ENCODE measurements at regions of chr12 and their contacts with region 1.

Region 1: DNA sequence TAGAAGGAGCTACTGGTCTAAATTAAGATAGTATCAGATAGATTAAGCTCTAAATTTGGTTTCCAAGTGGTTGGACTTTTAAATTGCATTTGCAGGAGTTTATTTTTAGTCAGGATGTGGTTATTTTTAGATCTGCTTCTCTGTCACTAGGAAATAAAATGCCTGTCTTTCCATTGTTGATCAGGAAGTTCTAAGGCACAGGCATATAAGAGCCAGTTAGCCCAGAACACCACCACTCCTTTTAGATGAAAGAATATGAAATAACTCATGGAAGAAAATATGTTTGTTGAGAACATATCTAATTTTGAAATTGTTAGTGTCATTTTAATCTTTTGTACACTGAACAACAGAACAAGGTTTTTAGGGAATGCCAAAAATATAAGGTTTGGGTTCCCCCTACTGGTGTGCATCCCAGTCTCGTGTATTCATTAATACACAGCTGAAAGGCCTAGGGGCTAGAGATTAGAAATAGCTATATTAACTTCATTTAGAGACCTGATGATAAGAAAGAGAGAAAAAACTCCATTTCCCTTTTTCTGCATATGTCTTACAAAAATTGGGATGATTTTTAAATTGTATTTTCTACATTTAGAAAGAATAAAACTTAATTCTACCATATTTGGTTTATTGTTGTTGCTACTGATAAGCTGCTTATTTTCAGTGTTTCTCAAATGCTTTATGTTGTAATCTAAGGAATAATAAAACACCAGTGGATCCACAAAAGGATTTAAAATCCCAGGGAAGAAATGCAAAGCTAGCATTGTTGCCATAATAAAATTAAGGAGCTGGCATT is 67.2 kb downstream of the RIC8B start:
- DNase-seq: no peak
- ATAC-seq: peak; percentile 79
- H3K4me3 ChIP-seq: no peak overlapping the region
- H3K27ac ChIP-seq: no peak overlapping the region
- H3K4me1 ChIP-seq: no peaks in the 10 kb centered on the region
- H3K27me3 ChIP-seq: no peaks in the 10 kb centered on the region
- CTCF ChIP-seq: peak; percentile 44 to 68 (median 60); a peak in 5 of 6 replicates
- EP300 ChIP-seq: no peak
- POLR2A ChIP-seq: no peak
- RAD21 ChIP-seq: peak; percentile 83

Region 2: GRCh38 chr12:106357549-106358395 is 483.9 kb before region 1 on chr12 and contains the start of gene POLR3B:
- CTCF ChIA-PET with region 1: interaction called, 50 read pairs
- POLR2A ChIA-PET with region 1: no interaction called
- RAD21 ChIA-PET with region 1: interaction called, 21 read pairs
- SMC1A ChIA-PET with region 1: interaction called, 17 read pairs
- in situ Hi-C with region 1: no loop called
- intact Hi-C with region 1: no loop called
- DNase-seq: peak; percentile 74
- ATAC-seq: peak; percentile 92
- H3K4me3 ChIP-seq: peak within 1 kb of the TSS; percentile 89
- H3K27ac ChIP-seq: peak within 1 kb of the TSS; percentile 79
- H3K4me1 ChIP-seq: no peaks in the 10 kb centered on the region
- H3K27me3 ChIP-seq: no peaks in the 10 kb centered on the region
- CTCF ChIP-seq: peak; percentile 85 to 95 (median 95); a peak in 5 of 6 replicates
- EP300 ChIP-seq: peak in 1 of 2 experiments; percentile 27; a peak in 1 of 4 replicates
- POLR2A ChIP-seq: peak; percentile 85
- RAD21 ChIP-seq: peak; percentile 68
- polyA plus RNA-seq, gene POLR3B: 2.3 to 4.3 TPM

Region 3: GRCh38 chr12:106682592-106683234 is 159.0 kb before region 1 on chr12:
- CTCF ChIA-PET with region 1: interaction called, 12 read pairs
- POLR2A ChIA-PET with region 1: no interaction called
- RAD21 ChIA-PET with region 1: interaction called, 3 read pairs
- SMC1A ChIA-PET with region 1: interaction called, 5 read pairs
- in situ Hi-C with region 1: no loop called
- intact Hi-C with region 1: loop called (anchors 5 kb)
- DNase-seq: no peak
- ATAC-seq: peak; percentile 78
- H3K4me3 ChIP-seq: no peak overlapping the region
- H3K27ac ChIP-seq: no peak overlapping the region
- H3K4me1 ChIP-seq: no peaks in the 10 kb centered on the region
- H3K27me3 ChIP-seq: no peaks in the 10 kb centered on the region
- CTCF ChIP-seq: peak; percentile 14 to 36 (median 24); a peak in 4 of 6 replicates
- EP300 ChIP-seq: no peak
- POLR2A ChIP-seq: no peak
- RAD21 ChIP-seq: peak; percentile 54

Region 4: DNA sequence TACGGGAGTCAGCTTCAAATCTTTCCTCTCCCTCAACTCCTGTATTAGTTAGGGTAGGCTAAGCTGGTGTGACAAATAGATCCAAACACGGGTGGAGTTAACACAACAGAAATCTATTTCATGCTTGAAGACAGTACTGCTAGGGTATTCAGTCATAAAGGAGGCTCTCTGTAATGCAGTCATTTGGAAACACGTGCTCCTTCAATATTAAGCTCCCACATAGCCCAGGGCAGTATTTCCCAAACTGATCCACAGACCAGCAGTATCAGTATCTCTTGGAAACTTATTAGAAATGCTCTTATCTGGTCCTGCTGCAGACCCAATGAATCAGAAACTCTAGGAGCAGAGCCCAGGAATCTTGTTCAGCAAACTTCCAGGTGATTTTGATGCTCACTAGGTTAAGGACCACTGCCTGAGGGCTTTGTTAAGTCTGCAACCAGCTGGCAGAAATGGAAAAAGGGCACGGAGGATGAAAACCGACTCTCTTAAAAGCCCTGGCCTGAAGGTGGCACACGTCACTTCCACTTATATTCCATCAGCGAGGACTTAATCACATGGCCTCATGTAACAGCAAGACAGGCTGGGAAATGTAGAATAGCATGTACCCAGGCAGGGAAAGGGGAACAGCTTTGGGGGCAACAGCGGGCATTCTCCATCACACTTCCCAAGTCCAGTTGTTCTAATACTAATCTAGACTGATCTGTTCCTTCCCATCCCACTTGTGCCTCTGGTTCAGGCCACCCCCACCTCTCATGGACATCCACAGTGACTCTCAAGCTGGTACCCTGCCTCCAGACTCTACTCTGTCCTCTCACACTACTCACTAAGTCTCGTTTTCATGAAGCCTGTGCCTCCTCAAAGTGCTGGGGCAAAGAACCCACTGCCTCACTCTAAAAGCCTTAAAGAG is 105.4 kb before region 1 on chr12:
- CTCF ChIA-PET with region 1: interaction called, 31 read pairs
- POLR2A ChIA-PET with region 1: no interaction called
- RAD21 ChIA-PET with region 1: interaction called, 33 read pairs
- SMC1A ChIA-PET with region 1: interaction called, 26 read pairs
- in situ Hi-C with region 1: no loop called
- intact Hi-C with region 1: loop called (anchors 5 kb)
- DNase-seq: no peak
- ATAC-seq: peak; percentile 78
- H3K4me3 ChIP-seq: no peak overlapping the region
- H3K27ac ChIP-seq: no peak overlapping the region
- H3K4me1 ChIP-seq: no peaks in the 10 kb centered on the region
- H3K27me3 ChIP-seq: no peaks in the 10 kb centered on the region
- CTCF ChIP-seq: peak; percentile 21 to 50 (median 24); a peak in 4 of 6 replicates
- EP300 ChIP-seq: no peak
- POLR2A ChIP-seq: no peak
- RAD21 ChIP-seq: peak; percentile 44

Region 5: DNA sequence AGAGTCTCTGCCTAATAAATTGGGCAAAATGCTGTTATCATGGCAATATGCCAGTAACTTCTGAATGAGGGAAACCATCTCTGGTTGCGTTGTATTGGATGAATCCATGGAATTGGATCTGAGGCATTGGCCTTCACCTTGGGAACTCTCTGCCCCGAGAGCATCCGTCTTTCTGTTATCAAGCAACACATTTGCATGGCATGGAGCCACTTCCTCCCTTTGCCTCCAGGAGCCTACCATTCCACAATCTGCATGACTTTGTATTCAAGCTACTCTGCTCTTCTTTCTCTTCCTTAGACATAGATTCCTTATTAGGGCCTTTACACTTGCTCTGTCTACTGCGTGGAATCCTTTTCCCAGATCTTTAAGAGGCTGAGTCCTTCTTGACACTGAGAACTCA is 10.0 kb before region 1 on chr12:
- CTCF ChIA-PET with region 1: interaction called, 22 read pairs
- POLR2A ChIA-PET with region 1: no interaction called
- RAD21 ChIA-PET with region 1: no interaction called
- SMC1A ChIA-PET with region 1: interaction called, 10 read pairs
- in situ Hi-C with region 1: no loop called
- intact Hi-C with region 1: no loop called
- DNase-seq: no peak
- ATAC-seq: no peak
- H3K4me3 ChIP-seq: no peak overlapping the region
- H3K27ac ChIP-seq: no peak overlapping the region
- H3K4me1 ChIP-seq: no peaks in the 10 kb centered on the region
- H3K27me3 ChIP-seq: no peaks in the 10 kb centered on the region
- CTCF ChIP-seq: no peak
- EP300 ChIP-seq: no peak
- POLR2A ChIP-seq: no peak
- RAD21 ChIP-seq: no peak

Region 6: GRCh38 chr12:106919910-106920544 is 78.3 kb after region 1 on chr12:
- CTCF ChIA-PET with region 1: interaction called, 60 read pairs
- POLR2A ChIA-PET with region 1: no interaction called
- RAD21 ChIA-PET with region 1: interaction called, 24 read pairs
- SMC1A ChIA-PET with region 1: interaction called, 18 read pairs
- in situ Hi-C with region 1: no loop called
- intact Hi-C with region 1: loop called (anchors 5 kb)
- DNase-seq: no peak
- ATAC-seq: peak; percentile 55
- H3K4me3 ChIP-seq: no peak overlapping the region
- H3K27ac ChIP-seq: no peak overlapping the region
- H3K4me1 ChIP-seq: peaks cover 6% of the 10 kb centered on the region
- H3K27me3 ChIP-seq: no peaks in the 10 kb centered on the region; a peak in 1 of 4 replicates
- CTCF ChIP-seq: peak; percentile 55 to 73 (median 64)
- EP300 ChIP-seq: no peak
- POLR2A ChIP-seq: no peak
- RAD21 ChIP-seq: peak; percentile 87

Measured in GM12878 (cell line).